Heart right ventricle (tissue), 16 donors: ENCODE measurements at regions of chr3 and their contacts with region 1.

Region 1: DNA sequence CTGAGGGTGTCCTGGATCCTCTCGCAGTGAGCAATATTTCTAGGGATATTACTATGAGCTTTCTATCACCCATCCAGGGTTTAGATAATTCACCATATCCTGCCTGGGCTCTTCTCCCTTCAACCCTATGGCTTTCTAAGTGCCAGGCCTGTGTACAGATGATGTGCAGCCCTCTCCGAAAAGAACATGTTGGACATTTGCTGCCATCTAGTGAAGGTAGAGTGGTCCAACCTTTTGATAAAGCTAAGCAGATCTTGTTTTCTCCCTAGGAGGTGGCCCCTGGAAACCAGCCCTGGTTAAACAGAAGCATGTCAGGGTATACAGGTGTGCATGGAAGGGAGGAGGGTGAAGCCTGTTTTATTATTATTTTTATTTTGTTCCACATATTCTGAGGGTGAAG is 27.9 kb upstream of the SCN10A start:
- DNase-seq: peak in 1 of 2 donors; percentile 25
- ATAC-seq: peak; percentile 67 to 87 (median 82)
- H3K4me3 ChIP-seq: no peak overlapping the region
- H3K27ac ChIP-seq: no peak overlapping the region
- H3K4me1 ChIP-seq: no peaks in the 10 kb centered on the region
- H3K27me3 ChIP-seq: peaks cover 0 to 10% (median 0%) of the 10 kb centered on the region in 7 donors
- CTCF ChIP-seq: peak; percentile 16 to 67 (median 52)

Region 2: DNA sequence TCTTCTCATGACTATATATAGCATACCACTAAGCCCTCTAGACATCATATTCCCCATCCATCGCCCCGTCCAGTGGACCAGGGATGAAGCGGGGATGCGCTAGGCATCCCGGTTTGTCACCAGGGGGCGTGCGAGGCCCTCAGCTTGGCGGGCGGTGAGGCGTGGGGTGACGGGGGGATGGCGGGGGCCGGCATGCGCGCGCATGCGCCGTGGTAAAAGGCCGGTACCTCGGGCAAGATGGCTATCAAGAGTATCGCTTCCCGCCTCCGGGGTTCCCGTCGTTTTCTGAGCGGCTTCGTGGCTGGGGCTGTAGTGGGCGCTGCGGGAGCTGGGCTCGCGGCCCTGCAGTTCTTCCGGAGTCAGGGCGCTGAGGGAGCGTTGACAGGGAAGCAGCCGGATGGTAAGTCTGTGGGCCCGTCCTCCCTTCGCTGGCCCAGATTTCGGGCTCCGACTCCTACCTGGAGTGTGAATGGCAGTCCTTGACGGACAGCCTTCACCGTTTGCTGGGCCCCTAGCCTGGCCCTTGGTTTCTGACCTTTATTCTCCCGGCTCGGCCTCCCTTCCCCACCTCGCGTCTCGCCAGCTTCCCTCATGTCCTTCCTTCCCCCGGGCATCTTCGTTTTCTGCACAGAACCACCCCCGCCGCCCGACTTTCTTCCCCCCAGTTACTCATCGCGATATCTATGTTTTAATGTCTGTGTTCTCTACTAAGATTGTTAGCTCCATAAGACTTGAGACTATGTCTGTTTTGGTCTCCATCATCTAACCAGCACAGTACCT is 347.6 kb before region 1 on chr3 and contains the start of gene EXOG:
- intact Hi-C with region 1: loop called in 4 of 10 experiments (anchors 10 kb)
- DNase-seq: peak; percentile 96 to 98
- ATAC-seq: peak; percentile 92 to 96 (median 96)
- H3K4me3 ChIP-seq: peak within 1 kb of the TSS; percentile 63 to 85 (median 72)
- H3K27ac ChIP-seq: peak within 1 kb of the TSS; percentile 51 to 91 (median 82)
- H3K4me1 ChIP-seq: peaks cover 0 to 43% (median 10%) of the 10 kb centered on the region in 9 donors
- H3K27me3 ChIP-seq: no peaks in the 10 kb centered on the region
- CTCF ChIP-seq: peak; percentile 86 to 96 (median 91)
- total RNA-seq, gene EXOG: 11.9 to 38.9 (median 25.4) TPM

Region 3: DNA sequence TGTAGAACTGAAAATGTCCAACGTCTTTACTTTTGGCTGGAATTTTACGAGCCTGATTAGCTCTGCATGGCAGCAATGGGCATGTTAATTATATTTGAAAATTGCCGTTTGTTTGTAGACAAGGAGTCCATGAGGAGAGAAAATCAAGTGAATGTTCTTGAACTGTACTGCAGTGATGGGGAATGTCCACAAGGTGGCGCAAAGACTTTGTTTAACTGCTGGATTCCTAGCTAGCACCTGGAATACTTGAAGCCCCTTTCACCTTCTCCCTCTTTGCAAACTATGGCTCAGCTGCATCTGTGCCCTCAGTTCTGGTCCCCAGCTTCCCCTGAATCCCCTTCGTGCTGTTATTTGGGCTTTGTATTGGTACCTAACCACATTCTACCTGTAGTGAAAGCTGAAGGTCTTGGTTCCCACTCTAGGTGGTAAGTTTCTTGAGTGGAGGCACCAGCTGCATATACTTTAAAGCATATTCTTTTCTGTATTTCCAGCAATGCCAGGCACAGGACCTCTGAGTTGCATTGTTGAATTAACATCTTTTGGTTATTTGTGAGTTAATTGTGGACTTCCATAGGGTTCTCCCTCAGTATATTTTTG is 322.4 kb before region 1 on chr3:
- intact Hi-C with region 1: loop called in 8 of 10 experiments (anchors 1 to 10 kb)
- DNase-seq: peak in 1 of 2 donors; percentile 70
- ATAC-seq: peak; percentile 45 to 78 (median 70)
- H3K4me3 ChIP-seq: no peak overlapping the region
- H3K27ac ChIP-seq: peak overlapping the region in 7 of 10 donors; percentile 12 to 75 (median 63)
- H3K4me1 ChIP-seq: peaks cover 0 to 37% (median 16%) of the 10 kb centered on the region in 9 donors
- H3K27me3 ChIP-seq: no peaks in the 10 kb centered on the region
- CTCF ChIP-seq: peak; percentile 80 to 95 (median 92)

Region 4: DNA sequence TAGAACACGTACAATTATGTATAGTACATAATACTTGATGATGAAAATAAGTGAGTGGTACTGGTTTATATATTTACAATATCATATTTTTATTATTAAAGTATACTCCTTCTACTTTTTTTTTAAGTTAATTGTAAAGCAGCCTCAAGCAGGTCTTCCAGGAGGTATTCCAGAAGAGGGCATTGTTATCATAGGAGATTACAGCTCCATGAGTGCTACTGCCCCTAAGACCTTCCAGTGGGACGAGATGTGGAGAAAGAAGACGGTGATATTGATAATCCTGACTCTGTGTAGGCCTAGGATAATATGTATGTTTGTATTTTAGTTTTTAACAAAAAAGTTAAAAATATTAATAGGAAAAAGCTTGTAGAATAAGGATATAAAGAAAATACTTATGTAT is 154.1 kb before region 1 on chr3:
- intact Hi-C with region 1: loop called in 8 of 10 experiments (anchors 2 to 10 kb)
- DNase-seq: no peak
- ATAC-seq: peak in 2 of 8 donors; percentile 42 to 58
- H3K4me3 ChIP-seq: no peak overlapping the region
- H3K27ac ChIP-seq: no peak overlapping the region
- H3K4me1 ChIP-seq: no peaks in the 10 kb centered on the region
- H3K27me3 ChIP-seq: no peaks in the 10 kb centered on the region
- CTCF ChIP-seq: peak in 3 of 9 donors; percentile 29 to 43 (median 38)

Region 5: DNA sequence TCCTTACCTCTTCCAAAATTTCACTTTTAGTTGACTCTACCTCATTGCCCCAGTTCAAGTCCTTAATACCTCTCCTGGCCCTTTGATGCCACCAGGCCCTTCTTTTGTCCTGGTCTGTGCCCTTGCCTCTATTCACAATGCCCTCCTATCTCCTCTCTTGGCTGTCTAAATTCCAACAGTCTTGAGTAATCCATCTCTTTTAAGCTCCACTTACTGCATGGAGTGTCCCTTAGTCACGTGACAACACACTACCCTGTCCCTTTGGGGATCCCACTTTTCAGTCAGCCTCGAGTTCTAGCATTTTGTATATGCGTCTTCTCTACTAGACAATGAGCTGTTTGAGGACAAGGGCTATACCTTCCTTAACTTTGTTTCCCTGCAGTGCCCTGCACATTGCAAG is 141.7 kb before region 1 on chr3:
- intact Hi-C with region 1: loop called in 1 of 10 experiments (anchors 5 kb)
- DNase-seq: no peak
- ATAC-seq: peak in 2 of 8 donors; percentile 64 to 76
- H3K4me3 ChIP-seq: no peak overlapping the region
- H3K27ac ChIP-seq: no peak overlapping the region
- H3K4me1 ChIP-seq: peaks cover 0 to 8% (median 0%) of the 10 kb centered on the region in 9 donors
- H3K27me3 ChIP-seq: peaks cover 0 to 4% (median 0%) of the 10 kb centered on the region in 7 donors
- CTCF ChIP-seq: no peak

Region 6: GRCh38 chr3:38738630-38739395 is 105.1 kb before region 1 on chr3:
- intact Hi-C with region 1: loop called in 3 of 10 experiments (anchors 5 to 10 kb)
- DNase-seq: peak in 1 of 2 donors; percentile 16
- ATAC-seq: peak in 3 of 8 donors; percentile 20 to 40 (median 22)
- H3K4me3 ChIP-seq: no peak overlapping the region
- H3K27ac ChIP-seq: no peak overlapping the region
- H3K4me1 ChIP-seq: no peaks in the 10 kb centered on the region
- H3K27me3 ChIP-seq: no peaks in the 10 kb centered on the region
- CTCF ChIP-seq: peak; percentile 31 to 58 (median 48)

Region 7: DNA sequence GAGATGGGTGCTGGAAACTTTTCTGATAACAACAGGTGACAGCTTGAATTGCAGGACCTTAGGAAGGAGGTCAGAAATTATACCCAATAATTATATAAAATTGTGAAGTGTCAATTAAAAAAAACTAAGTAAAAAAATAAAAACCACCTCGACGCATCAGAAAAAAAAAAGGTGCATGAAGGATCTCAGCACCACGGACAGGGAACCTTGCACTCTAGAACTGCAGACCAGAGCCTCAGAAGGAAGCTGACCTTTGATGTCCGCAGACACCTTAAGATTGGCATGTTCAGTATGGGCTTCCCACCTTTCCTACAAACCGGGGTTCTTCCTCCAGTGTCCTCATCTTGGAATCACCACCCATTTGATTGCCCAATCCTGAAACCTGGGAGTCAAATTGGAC is 88.8 kb before region 1 on chr3:
- intact Hi-C with region 1: no loop called
- DNase-seq: no peak
- ATAC-seq: no peak
- H3K4me3 ChIP-seq: no peak overlapping the region
- H3K27ac ChIP-seq: no peak overlapping the region
- H3K4me1 ChIP-seq: no peaks in the 10 kb centered on the region
- H3K27me3 ChIP-seq: peaks cover 0 to 10% (median 0%) of the 10 kb centered on the region in 7 donors
- CTCF ChIP-seq: no peak